ENCODE measurements at regions of chr17 and their contacts with region 1.

Region 1: GRCh38 chr17:2179615-2180295 is 123.8 kb downstream of the SMG6 start:
- DNase-seq: no peak
- H3K4me3 ChIP-seq: no peak overlapping the region
- H3K27ac ChIP-seq: peak overlapping the region; percentile 75
- H3K4me1 ChIP-seq: peaks cover 86% of the 10 kb centered on the region
- H3K27me3 ChIP-seq: no peaks in the 10 kb centered on the region
- CTCF ChIP-seq: no peak
- POLR2A ChIP-seq: no peak

Region 2: GRCh38 chr17:2214047-2214928 is 34.5 kb after region 1 on chr17:
- intact Hi-C with region 1: loop called (anchors 5 kb)
- DNase-seq: no peak
- H3K4me3 ChIP-seq: no peak overlapping the region
- H3K27ac ChIP-seq: peak overlapping the region; percentile 85
- H3K4me1 ChIP-seq: peaks cover 53% of the 10 kb centered on the region
- H3K27me3 ChIP-seq: no peaks in the 10 kb centered on the region
- CTCF ChIP-seq: no peak
- POLR2A ChIP-seq: no peak